ENCODE measurements at regions of chr5 and their contacts with region 1.

Region 1: DNA sequence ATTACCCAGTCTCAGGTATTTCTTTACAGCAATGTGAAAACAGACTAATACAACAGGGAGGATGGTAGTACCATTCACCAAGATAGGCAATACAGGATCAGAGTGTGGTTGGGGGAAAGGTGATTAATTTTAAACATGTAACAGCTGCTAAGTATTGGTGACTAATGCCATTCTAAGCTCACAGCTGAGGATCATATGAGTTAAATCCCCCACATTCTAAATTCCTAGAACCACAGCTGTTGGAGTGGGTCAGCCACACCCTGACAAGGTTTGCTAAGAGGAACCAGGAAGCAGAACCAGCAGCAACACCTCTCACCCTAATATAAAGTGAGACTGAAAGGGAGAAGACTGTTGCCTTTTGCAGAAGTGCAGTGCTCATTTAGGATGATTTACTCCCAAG is 24.8 kb downstream of the HSPB3 start:
- H3K4me3 Mint-ChIP-seq: peak overlapping the region; percentile 50
- H3K27ac Mint-ChIP-seq: peak overlapping the region; percentile 89
- H3K4me1 Mint-ChIP-seq: peaks cover 32% of the 10 kb centered on the region
- H3K27me3 Mint-ChIP-seq: peaks cover 5% of the 10 kb centered on the region

Region 2: DNA sequence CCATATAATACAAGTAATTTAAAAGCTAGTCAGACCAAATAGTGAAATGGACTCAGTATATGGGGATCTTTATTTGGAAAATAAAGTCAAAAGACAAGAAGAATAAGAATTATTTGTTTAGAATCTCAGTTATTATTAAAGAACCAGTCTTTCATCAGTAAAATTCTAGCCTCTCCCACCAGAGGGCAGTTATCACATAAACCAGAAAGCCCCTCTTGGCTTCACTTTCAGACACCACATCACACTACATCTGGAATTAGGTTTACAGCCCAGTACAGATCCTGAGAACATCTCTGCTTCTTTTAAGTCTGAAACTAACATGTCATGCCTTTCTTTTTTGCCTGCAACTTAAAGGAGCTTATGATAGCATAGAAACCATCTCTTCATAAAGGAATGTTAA is 37.0 kb before region 1 on chr5:
- intact Hi-C with region 1: loop called (anchors 5 kb)
- H3K4me3 Mint-ChIP-seq: no peak overlapping the region
- H3K27ac Mint-ChIP-seq: no peak overlapping the region
- H3K4me1 Mint-ChIP-seq: peaks cover 23% of the 10 kb centered on the region
- H3K27me3 Mint-ChIP-seq: peaks cover 2% of the 10 kb centered on the region

Region 3: DNA sequence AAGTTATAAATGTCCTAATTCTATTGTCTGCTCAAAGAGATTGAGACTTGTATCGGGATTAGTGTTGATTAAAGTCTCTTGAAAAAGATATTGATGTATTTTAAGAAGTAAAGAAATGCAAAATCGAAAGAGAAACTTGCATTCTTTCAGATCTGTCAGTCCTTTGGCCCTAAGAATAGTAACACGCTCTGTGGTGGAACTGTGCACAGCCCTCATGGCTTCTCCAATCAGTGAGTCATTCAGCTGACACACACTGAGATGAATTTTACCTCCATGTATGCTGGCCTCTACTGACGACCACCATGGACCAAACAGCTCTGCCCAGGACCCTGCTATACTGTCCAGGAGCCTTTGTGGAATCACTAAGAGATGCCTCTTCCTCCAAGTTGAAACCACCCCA is 272.7 kb after region 1 on chr5:
- intact Hi-C with region 1: no loop called
- H3K4me3 Mint-ChIP-seq: no peak overlapping the region
- H3K27ac Mint-ChIP-seq: no peak overlapping the region
- H3K4me1 Mint-ChIP-seq: peaks cover 35% of the 10 kb centered on the region
- H3K27me3 Mint-ChIP-seq: no peaks in the 10 kb centered on the region